Activated CD4-positive, alpha-beta T cell treated with anti-CD3 and anti-CD28 coated beads, Interleukin-2, amount 10 ng/mL, durations not matched to agents 24 days and 14 days (primary cell): ENCODE measurements at regions of chr11 and their contacts with region 1.

Region 1: GRCh38 chr11:83724008-83724461 is 437.9 kb upstream of the CCDC90B start:
- DNase-seq: peak; percentile 56
- H3K4me3 Mint-ChIP-seq: peak overlapping the region; percentile 43
- H3K27ac Mint-ChIP-seq: no peak overlapping the region
- H3K4me1 Mint-ChIP-seq: peaks cover 2% of the 10 kb centered on the region
- H3K27me3 Mint-ChIP-seq: peaks cover 17% of the 10 kb centered on the region

Region 2: DNA sequence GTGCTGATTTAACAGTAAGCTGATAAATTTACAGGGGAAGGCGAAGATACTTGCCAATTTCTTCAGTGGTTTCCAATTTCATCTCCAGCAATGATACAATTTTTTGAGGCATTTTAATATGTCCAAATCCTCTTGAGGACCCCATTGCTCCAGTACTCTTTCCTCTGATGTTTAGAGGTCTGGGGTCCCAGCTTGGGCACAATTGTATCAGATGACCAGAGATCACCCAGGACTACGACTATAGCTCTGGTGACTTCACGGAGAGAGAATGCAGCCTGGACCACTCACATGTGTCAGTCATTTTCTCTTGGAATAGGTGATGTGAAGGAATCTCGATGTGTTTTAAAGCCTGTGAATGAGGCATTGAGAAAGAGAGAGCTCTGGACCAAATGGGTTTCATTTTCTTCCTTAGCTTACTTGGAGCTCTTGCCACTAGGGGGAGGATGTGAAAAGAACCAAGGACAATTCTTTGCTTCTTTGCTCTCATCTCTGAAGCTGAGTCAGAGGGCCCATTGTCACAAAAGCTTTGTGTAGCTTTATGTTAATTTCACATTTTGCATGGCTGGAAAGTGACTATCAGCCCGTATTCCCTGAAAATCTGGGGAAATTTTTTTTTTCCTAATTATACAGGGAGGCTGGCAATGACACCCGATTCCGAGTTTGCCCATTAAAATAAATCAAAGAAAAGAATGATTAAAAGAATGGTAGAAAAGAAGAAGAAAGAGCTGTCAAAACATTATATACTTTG is 431.2 kb before region 1 on chr11:
- intact Hi-C with region 1: loop called (anchors 5 kb)
- DNase-seq: peak; percentile 81
- H3K4me3 Mint-ChIP-seq: peak overlapping the region; percentile 60
- H3K27ac Mint-ChIP-seq: no peak overlapping the region
- H3K4me1 Mint-ChIP-seq: peaks cover 2% of the 10 kb centered on the region
- H3K27me3 Mint-ChIP-seq: peaks cover 27% of the 10 kb centered on the region

Region 3: DNA sequence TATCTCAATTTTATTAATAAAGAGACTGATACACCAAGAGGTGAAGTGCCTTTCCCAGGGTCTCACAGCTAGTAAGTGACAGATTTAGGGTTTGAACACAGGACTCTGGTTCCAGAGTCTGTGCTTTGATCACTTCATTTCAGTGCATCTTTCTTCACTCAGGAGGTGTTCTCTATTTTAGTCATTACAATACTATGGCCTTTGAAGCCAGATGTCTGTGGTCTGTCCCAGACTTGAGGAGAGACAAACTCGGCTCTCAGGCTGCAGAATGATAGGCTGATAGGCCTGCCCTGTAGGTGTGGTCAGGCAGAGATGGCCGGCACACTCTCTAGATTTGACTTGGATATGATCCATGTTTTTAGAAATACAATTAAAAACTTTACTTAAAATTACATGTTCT is 40.6 kb after region 1 on chr11:
- intact Hi-C with region 1: no loop called
- DNase-seq: no peak
- H3K4me3 Mint-ChIP-seq: no peak overlapping the region
- H3K27ac Mint-ChIP-seq: no peak overlapping the region
- H3K4me1 Mint-ChIP-seq: no peaks in the 10 kb centered on the region
- H3K27me3 Mint-ChIP-seq: no peaks in the 10 kb centered on the region